WTC11 (cell line): ENCODE measurements at regions of chr7 and their contacts with region 1.

Region 1: GRCh38 chr7:36291387-36292316 is 98.0 kb upstream of the ANLN start:
- DNase-seq: peak; percentile 83
- ATAC-seq: peak; percentile 84
- H3K4me3 Mint-ChIP-seq: no peak overlapping the region; the same call in 1 of the 2 replicates
- H3K27ac Mint-ChIP-seq: peak overlapping the region; percentile 64; the same call in 1 of the 2 replicates
- H3K4me1 Mint-ChIP-seq: peaks cover 27% of the 10 kb centered on the region
- H3K27me3 Mint-ChIP-seq: no peaks in the 10 kb centered on the region
- CTCF ChIP-seq: peak; percentile 98

Region 2: DNA sequence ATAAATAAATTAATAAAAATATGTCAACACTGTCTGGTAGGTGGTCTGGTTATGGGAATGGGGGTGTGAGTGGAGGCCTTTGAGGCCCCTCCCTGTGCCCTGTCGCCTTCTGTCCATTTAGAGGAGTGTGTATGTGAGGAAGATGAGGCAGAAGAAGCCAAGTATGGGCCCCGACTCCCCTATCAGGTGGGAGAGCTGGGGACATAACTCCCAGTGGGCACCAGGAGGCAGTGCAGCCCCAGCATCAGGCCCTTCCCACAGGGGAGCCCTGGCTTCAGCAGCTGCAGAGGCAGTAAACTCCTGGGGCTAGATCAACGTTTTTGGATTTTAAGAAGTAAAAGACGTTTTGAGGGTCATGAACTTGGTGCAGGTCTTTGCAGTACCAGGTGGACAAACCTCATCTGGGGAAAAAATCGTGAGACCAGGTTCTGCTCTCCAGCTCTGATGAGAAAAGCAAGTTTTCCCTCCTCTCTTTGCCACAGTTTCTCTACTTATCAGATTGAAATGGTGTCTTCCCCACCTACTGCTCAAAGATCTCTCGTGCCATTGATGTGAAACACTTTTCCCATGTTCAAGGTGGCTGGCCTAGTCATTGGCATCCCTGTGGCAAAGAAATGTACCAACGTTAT is 306.4 kb before region 1 on chr7:
- CTCF ChIA-PET with region 1: interaction called, 26 read pairs
- POLR2A ChIA-PET with region 1: no interaction called
- DNase-seq: peak; percentile 82
- ATAC-seq: peak; percentile 99
- H3K4me3 Mint-ChIP-seq: no peak overlapping the region
- H3K27ac Mint-ChIP-seq: no peak overlapping the region
- H3K4me1 Mint-ChIP-seq: peaks cover 4% of the 10 kb centered on the region; the same call in 1 of the 2 replicates
- H3K27me3 Mint-ChIP-seq: no peaks in the 10 kb centered on the region
- CTCF ChIP-seq: peak; percentile 73

Region 3: GRCh38 chr7:36127075-36127740 is 164.4 kb before region 1 on chr7:
- CTCF ChIA-PET with region 1: interaction called, 14 read pairs
- POLR2A ChIA-PET with region 1: no interaction called
- DNase-seq: no peak
- ATAC-seq: peak; percentile 70
- H3K4me3 Mint-ChIP-seq: no peak overlapping the region
- H3K27ac Mint-ChIP-seq: no peak overlapping the region
- H3K4me1 Mint-ChIP-seq: peaks cover 5% of the 10 kb centered on the region; the same call in 1 of the 2 replicates
- H3K27me3 Mint-ChIP-seq: no peaks in the 10 kb centered on the region; the same call in 1 of the 2 replicates
- CTCF ChIP-seq: no peak

Region 4: DNA sequence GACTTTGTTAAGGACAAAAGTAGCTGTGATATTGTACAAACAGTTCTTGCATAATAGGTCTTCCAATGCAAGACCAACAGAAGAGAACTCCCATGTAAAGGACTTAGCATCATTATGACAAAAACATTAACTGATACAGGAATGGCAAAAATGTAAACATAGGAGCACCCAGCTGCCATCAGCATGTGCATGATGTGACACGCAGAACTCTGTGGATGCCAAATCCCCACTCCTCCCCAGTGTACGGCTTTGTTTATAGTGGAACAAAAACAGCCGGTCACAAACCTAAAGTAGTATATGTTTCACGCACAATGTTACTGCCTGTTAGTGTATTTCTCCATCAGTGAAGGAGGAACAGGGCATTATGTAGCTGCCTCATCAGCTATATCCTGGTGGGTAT is 748.7 kb after region 1 on chr7:
- CTCF ChIA-PET with region 1: no interaction called
- POLR2A ChIA-PET with region 1: no interaction called
- DNase-seq: no peak
- ATAC-seq: no peak
- H3K4me3 Mint-ChIP-seq: no peak overlapping the region
- H3K27ac Mint-ChIP-seq: no peak overlapping the region
- H3K4me1 Mint-ChIP-seq: no peaks in the 10 kb centered on the region
- H3K27me3 Mint-ChIP-seq: no peaks in the 10 kb centered on the region
- CTCF ChIP-seq: no peak